ENCODE measurements at regions of chr2 and their contacts with region 1.

Region 1: DNA sequence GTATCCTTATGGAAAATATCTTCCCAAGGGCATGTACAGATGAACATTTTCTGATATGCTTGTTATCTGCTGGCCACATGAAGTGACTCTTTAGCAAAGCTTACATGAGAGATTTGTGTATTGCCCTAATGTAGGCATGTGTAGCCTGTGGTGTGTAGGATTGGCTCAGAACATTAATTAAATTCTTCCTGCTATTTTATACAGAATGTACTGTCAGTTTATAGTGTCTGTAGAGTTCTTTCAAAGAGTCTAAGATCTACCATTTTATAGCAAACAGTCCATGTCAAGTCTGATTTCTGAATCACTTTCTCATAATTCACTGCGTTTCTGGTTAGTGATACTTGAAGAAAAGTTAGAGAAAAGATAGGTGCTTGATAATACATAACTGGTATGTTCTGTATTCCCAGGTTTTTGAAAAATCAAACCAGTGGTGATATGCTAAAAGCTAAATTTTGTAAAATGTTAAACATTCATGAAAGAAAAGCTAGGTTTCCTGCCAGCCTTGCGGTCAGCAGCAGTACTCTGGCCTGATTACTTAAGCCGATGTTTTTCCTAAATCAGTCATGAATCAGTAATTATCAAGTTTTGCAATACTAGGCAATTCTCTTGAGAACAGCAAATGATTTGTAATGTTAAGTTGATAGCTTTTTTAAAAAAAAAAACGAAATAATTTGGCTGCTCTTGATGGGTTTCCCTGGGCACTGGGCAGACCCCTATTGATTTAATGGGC is 30.9 kb upstream of the EFEMP1 start:
- DNase-seq: no peak
- ATAC-seq: peak in 1 of 4 donors; percentile 41
- H3K4me3 ChIP-seq: no peak overlapping the region
- H3K27ac ChIP-seq: no peak overlapping the region
- H3K4me1 ChIP-seq: no peaks in the 10 kb centered on the region
- H3K27me3 ChIP-seq: no peaks in the 10 kb centered on the region
- CTCF ChIP-seq: no peak

Region 2: DNA sequence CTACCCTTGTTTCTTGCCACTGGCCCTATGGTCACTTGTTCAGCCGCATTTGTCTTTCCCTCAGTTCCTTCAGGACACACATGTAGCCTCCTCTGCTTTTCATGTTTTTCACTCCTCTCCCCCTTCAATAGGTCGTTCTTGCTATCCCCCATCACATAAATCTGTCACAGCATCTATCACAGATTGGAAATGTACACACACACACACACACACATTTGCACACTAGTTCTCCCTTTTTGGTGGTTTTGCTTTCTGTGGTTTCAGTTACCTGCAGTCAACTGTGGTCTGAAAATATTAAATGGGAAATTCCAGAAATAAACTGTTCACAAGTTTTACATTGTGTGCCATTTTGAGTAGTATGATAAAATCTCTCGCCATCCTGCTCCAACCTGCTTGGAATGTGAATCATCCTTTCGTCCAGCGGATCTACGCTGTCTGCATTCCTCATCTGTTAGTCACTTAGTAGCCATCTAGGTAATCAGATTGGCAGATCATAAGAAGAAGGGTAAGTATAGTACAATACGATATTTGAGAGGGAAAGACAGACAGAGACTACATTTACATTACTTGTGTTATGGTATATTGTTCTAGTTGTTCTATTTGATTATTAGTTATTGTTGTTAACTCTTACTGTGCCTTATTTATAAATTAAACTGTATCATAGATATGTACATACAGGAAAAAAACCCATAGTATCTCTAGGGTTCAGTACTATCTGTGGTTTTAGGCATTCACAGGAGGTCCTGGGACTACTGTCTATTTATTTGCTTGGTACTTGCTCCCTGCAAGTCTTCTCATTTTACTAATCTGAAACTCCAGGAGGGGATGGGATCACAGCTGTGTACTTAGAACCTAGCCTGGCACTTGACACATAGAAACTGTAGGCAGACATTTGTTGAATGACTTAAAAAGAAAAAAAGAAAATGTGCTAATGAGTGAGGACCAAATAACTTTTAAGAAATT is 174.7 kb before region 1 on chr2:
- intact Hi-C with region 1: loop called in 1 of 2 experiments (anchors 5 kb)
- DNase-seq: no peak
- ATAC-seq: no peak
- H3K4me3 ChIP-seq: no peak overlapping the region
- H3K27ac ChIP-seq: no peak overlapping the region
- H3K4me1 ChIP-seq: no peaks in the 10 kb centered on the region
- H3K27me3 ChIP-seq: no peaks in the 10 kb centered on the region
- CTCF ChIP-seq: no peak

Region 3: GRCh38 chr2:56266761-56267414 is 312.4 kb after region 1 on chr2:
- intact Hi-C with region 1: no loop called
- DNase-seq: no peak
- ATAC-seq: no peak
- H3K4me3 ChIP-seq: no peak overlapping the region
- H3K27ac ChIP-seq: no peak overlapping the region
- H3K4me1 ChIP-seq: no peaks in the 10 kb centered on the region
- H3K27me3 ChIP-seq: no peaks in the 10 kb centered on the region
- CTCF ChIP-seq: no peak